K562 (cell line): ENCODE measurements at regions of chr3 and their contacts with region 1.

Region 1: GRCh38 chr3:138946181-138947059 is 517 bp downstream of the FOXL2 start:
- DNase-seq: peak; percentile 56 to 88 (median 68)
- ATAC-seq: peak; percentile 46
- H3K4me3 ChIP-seq: peak overlapping the region; percentile 62
- H3K27ac ChIP-seq: peak overlapping the region; percentile 87
- H3K4me1 ChIP-seq: peaks cover 20 to 50% of the 10 kb centered on the region in 2 experiments; a peak in 4 of 5 replicates
- H3K27me3 ChIP-seq: no peaks in the 10 kb centered on the region
- CTCF ChIP-seq: peak; percentile 65 to 68 (median 67)
- EP300 ChIP-seq: no peak
- POLR2A ChIP-seq: no peak
- RAD21 ChIP-seq: peak in 1 of 2 experiments; percentile 35; a peak in 1 of 4 replicates

Region 2: GRCh38 chr3:138935848-138936740 is 10.3 kb before region 1 on chr3:
- CTCF ChIA-PET with region 1: interaction called, 4 read pairs
- POLR2A ChIA-PET with region 1: interaction called, 10 read pairs
- in situ Hi-C with region 1: no loop called
- intact Hi-C with region 1: no loop called
- DNase-seq: peak; percentile 85 to 91 (median 88)
- ATAC-seq: peak; percentile 88
- H3K4me3 ChIP-seq: peak overlapping the region; percentile 45
- H3K27ac ChIP-seq: peak overlapping the region; percentile 54
- H3K4me1 ChIP-seq: peaks cover 4 to 43% of the 10 kb centered on the region in 2 experiments; a peak in 3 of 5 replicates
- H3K27me3 ChIP-seq: no peaks in the 10 kb centered on the region
- CTCF ChIP-seq: peak; percentile 83 to 88 (median 87)
- EP300 ChIP-seq: no peak
- POLR2A ChIP-seq: peak; percentile 58
- RAD21 ChIP-seq: peak; percentile 55 to 68

Region 3: GRCh38 chr3:138960417-138960852 is 14.0 kb after region 1 on chr3:
- CTCF ChIA-PET with region 1: no interaction called
- POLR2A ChIA-PET with region 1: interaction called, 4 read pairs
- in situ Hi-C with region 1: no loop called
- intact Hi-C with region 1: loop called (anchors 2 kb)
- DNase-seq: no peak
- ATAC-seq: no peak
- H3K4me3 ChIP-seq: no peak overlapping the region
- H3K27ac ChIP-seq: no peak overlapping the region
- H3K4me1 ChIP-seq: peaks cover 0 to 9% of the 10 kb centered on the region in 2 experiments; a peak in 2 of 5 replicates
- H3K27me3 ChIP-seq: peaks cover 2 to 10% of the 10 kb centered on the region in 2 experiments; a peak in 2 of 5 replicates
- CTCF ChIP-seq: no peak
- EP300 ChIP-seq: no peak
- POLR2A ChIP-seq: no peak
- RAD21 ChIP-seq: no peak

Region 4: DNA sequence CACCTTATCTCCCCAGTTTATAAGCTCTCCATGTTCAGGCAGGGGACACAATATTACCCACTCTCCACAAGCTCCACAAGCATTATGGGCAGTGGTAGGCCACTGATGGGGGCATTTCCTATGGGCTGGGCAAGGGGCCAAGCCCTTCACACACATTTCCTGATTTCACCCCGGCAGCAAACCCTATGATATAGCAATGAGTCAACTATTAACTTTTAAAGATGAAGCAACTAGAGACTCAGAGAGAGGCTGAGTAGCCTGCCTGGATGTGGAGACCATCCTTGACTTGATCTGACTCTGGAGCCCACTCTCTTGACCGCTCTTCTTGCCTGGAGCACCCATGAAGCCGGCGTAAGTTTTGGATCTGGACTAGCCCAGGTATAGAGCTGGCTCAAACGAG is 28.0 kb after region 1 on chr3:
- CTCF ChIA-PET with region 1: interaction called, 8 read pairs
- POLR2A ChIA-PET with region 1: interaction called, 3 read pairs
- in situ Hi-C with region 1: no loop called
- intact Hi-C with region 1: loop called (anchors 2 kb)
- DNase-seq: no peak
- ATAC-seq: no peak
- H3K4me3 ChIP-seq: no peak overlapping the region
- H3K27ac ChIP-seq: no peak overlapping the region
- H3K4me1 ChIP-seq: no peaks in the 10 kb centered on the region; a peak in 1 of 5 replicates
- H3K27me3 ChIP-seq: peaks cover 0 to 5% of the 10 kb centered on the region in 2 experiments; a peak in 1 of 5 replicates
- CTCF ChIP-seq: no peak
- EP300 ChIP-seq: no peak
- POLR2A ChIP-seq: no peak
- RAD21 ChIP-seq: no peak